Kidney (tissue), 22 donors: ENCODE measurements at regions of chr13 and their contacts with region 1.

Region 1: GRCh38 chr13:110412132-110412914 is 105.2 kb downstream of the COL4A2 start:
- DNase-seq: peak; percentile 89 to 95 (median 92)
- H3K4me3 ChIP-seq: peak overlapping the region in 1 of 3 donors; percentile 24
- H3K27ac ChIP-seq: peak overlapping the region; percentile 71 to 72
- H3K4me1 ChIP-seq: peaks cover 8 to 39% (median 26%) of the 10 kb centered on the region in 3 donors
- H3K27me3 ChIP-seq: no peaks in the 10 kb centered on the region
- CTCF ChIP-seq: peak; percentile 94

Region 2: DNA sequence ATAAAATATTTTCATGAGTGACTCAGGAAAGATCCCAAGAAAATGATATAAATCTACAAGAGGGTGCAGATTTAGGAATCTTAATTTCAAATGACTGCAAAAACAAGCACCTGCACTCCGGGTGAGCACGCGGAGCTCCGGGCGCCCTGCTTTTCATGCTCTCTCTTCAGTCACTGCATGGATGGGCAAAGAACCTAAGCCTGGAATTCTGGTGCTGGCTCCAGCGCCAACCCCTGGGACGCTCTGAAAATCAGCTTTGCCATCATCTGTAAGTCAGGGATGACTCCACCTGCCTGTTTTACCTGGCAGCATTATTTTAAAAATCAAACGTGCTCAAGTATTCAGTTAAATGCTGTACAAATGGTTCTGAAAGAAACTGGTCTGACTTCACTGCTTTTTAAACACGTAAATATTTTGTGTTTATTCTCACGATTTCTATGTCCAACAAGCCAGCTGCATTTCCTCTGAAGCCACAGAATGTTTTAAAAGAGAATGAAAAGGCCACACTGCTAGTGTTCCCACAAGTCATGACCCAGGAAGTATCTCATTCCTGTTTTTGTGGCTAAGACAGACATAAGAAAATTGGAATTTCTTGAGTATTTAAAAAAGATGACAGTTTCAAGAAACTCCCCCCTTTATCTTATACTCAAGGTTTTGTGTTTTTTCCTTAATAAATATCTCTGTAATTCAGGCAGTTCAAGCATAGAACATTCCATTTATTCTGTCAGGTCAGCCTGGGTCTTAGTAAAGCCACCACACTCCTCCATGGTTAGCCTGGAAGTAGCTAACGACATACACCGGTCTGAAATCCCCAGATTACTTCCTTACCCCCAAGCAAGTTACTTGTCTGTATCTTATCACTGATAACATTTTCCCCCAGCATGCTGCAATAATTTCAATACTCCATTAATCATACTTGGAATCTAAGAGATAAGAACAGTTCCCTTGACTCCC is 186.4 kb before region 1 on chr13:
- intact Hi-C with region 1: loop called (anchors 10 kb)
- DNase-seq: peak in 2 of 5 donors; percentile 74 to 91
- H3K4me3 ChIP-seq: no peak overlapping the region
- H3K27ac ChIP-seq: peak overlapping the region; percentile 18 to 57
- H3K4me1 ChIP-seq: peaks cover 2 to 11% (median 2%) of the 10 kb centered on the region in 3 donors
- H3K27me3 ChIP-seq: no peaks in the 10 kb centered on the region
- CTCF ChIP-seq: no peak

Region 3: GRCh38 chr13:110306960-110307746 is 105.2 kb before region 1 on chr13 and contains the starts of genes COL4A1 and COL4A2:
- intact Hi-C with region 1: loop called (anchors 10 kb)
- DNase-seq: peak; percentile 83 to 95 (median 88)
- H3K4me3 ChIP-seq: peak within 1 kb of the TSS; percentile 90 to 96 (median 93)
- H3K27ac ChIP-seq: peak within 1 kb of the TSS; percentile 89 to 94
- H3K4me1 ChIP-seq: peaks cover 6 to 60% (median 40%) of the 10 kb centered on the region in 3 donors
- H3K27me3 ChIP-seq: no peaks in the 10 kb centered on the region
- CTCF ChIP-seq: no peak
- total RNA-seq, gene COL4A1: 218 TPM
- total RNA-seq, gene COL4A2: 265 TPM

Region 4: GRCh38 chr13:110340812-110341444 is 71.4 kb before region 1 on chr13:
- intact Hi-C with region 1: no loop called
- DNase-seq: peak; percentile 65 to 95 (median 76)
- H3K4me3 ChIP-seq: peak overlapping the region in 1 of 3 donors; percentile 26
- H3K27ac ChIP-seq: peak overlapping the region; percentile 86 to 91
- H3K4me1 ChIP-seq: peaks cover 0 to 27% (median 12%) of the 10 kb centered on the region in 3 donors
- H3K27me3 ChIP-seq: no peaks in the 10 kb centered on the region
- CTCF ChIP-seq: no peak

Region 5: DNA sequence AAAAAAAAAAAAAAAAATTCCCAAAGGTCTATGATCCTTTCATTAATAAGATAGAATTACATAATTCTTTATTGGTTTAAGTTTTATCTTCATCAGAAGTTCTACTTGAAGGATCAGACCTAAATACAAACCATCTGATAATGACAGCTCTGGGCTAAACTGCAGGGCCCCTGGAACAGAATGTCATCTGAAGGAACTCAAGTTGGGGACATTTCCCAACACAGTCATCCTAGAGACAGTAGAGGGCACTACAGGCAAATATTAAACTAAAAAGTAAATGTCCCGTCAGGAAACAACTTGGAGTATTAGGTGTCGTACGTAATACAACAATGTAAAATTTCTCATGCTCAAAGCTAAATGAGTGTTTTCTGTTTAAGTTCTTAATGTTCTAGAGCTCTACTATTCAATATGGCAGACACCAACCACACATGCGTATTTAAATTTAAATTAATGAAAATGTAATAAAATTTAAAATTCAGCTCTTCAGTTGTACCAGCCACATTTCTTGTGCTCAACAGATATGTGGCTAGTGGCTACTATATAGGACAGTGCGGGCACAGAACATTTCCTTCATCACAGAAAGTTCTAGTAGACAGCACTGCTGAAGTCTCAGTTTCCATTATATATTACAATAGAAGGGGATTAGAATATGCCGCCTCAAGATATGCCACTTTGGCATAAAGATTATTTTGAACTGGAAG is 181.3 kb after region 1 on chr13:
- intact Hi-C with region 1: no loop called
- DNase-seq: peak in 2 of 5 donors; percentile 82 to 86
- H3K4me3 ChIP-seq: no peak overlapping the region
- H3K27ac ChIP-seq: no peak overlapping the region
- H3K4me1 ChIP-seq: peaks cover 0 to 4% (median 0%) of the 10 kb centered on the region in 3 donors
- H3K27me3 ChIP-seq: no peaks in the 10 kb centered on the region
- CTCF ChIP-seq: peak; percentile 69